ENCODE measurements at regions of chr10 and their contacts with region 1.

Region 1: DNA sequence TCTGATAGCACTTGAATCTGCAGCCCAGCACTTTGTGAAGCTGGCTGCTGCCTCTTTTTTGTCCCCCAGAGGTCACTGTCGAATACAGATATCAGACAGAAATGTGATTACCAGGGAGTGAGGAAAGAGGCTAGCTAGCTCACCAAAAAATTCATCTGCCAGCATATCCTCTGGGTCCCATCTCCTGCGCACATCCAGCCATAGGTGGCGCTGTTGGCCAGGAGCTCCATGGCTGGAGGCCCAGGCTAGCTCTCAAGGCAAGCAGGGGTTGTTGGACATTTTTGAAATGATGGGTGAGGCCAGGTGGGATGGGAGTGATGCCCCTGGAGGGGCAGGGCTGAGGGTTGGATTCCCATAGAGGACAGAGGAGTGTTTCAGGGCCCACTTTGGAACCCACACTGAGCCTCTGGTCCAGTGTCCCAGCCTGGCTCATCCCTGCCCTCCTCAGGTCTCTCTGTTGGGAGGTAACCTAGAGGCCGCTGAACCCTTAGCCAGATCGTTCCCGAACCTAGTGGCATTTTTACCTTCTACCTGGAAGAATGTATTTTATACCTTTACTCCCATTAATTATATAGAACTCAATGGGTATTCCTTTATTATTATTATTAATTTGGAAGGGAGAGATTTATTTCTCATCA is 14.8 kb downstream of the DPCD start:
- DNase-seq: peak; percentile 62
- H3K4me3 ChIP-seq: no peak overlapping the region
- H3K27ac ChIP-seq: no peak overlapping the region
- H3K4me1 ChIP-seq: no peaks in the 10 kb centered on the region
- H3K27me3 ChIP-seq: no peaks in the 10 kb centered on the region
- CTCF ChIP-seq: peak; percentile 70 to 79 (median 73)
- EP300 ChIP-seq: no peak
- POLR2A ChIP-seq: no peak

Region 2: DNA sequence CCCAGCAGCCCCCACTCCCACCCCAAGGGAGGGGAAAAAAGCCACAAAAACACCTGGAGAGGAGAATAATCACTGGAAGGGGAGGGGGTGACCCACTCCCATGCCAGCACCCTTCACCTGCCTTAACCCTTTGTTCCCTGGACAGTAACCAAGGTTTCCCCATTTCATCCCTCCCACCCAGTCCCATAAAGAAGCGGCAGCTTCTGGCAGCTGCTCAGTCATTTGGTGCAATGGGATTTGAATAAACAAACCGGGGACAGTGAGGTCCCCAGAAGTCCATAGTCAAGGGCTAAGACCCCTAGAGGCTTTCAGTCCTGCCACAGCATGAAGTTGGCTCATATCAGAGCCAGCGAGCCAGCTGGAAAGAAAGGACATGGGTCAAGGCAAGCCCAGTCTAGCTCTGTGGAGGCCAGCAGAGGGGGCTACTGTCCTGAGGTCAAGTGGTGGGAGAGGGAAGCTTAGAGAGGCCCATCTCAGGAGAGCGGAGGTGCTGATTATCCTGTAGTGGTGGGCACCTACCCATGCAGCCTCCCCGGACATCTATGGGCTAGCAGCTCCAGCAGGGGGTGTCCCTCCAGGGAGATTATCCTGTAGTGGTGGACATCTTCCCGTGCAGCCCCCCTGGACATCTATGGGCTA is 314.8 kb before region 1 on chr10:
- in situ Hi-C with region 1: no loop called
- intact Hi-C with region 1: no loop called
- DNase-seq: no peak
- H3K4me3 ChIP-seq: no peak overlapping the region
- H3K27ac ChIP-seq: no peak overlapping the region
- H3K4me1 ChIP-seq: peaks cover 4 to 25% (median 14%) of the 10 kb centered on the region in 4 donors
- H3K27me3 ChIP-seq: peaks cover 98% of the 10 kb centered on the region
- CTCF ChIP-seq: peak in 1 of 5 experiments; percentile 16
- EP300 ChIP-seq: no peak
- POLR2A ChIP-seq: no peak

Region 3: GRCh38 chr10:101782811-101783735 is 180.2 kb after region 1 on chr10 and contains the start of gene NPM3:
- in situ Hi-C with region 1: loop called in 3 of 4 experiments (anchors 10 kb)
- intact Hi-C with region 1: no loop called
- DNase-seq: peak; percentile 86
- H3K4me3 ChIP-seq: peak within 1 kb of the TSS; percentile 43 to 66 (median 59)
- H3K27ac ChIP-seq: peak within 1 kb of the TSS; percentile 47 to 69 (median 52)
- H3K4me1 ChIP-seq: peaks cover 25 to 55% (median 42%) of the 10 kb centered on the region in 4 donors
- H3K27me3 ChIP-seq: peaks cover 13% of the 10 kb centered on the region
- CTCF ChIP-seq: no peak
- EP300 ChIP-seq: no peak
- POLR2A ChIP-seq: peak; percentile 18
- total RNA-seq, gene NPM3: 8.2 to 18.7 (median 12.7) TPM